ENCODE measurements at regions of chr5 and their contacts with region 1.

Region 1: GRCh38 chr5:96641368-96642228 is 20.6 kb upstream of the CAST start:
- DNase-seq: no peak
- H3K4me3 Mint-ChIP-seq: no peak overlapping the region
- H3K27ac Mint-ChIP-seq: no peak overlapping the region
- H3K4me1 Mint-ChIP-seq: peaks cover 9% of the 10 kb centered on the region
- H3K27me3 Mint-ChIP-seq: peaks cover 18% of the 10 kb centered on the region

Region 2: GRCh38 chr5:96626956-96627355 is 14.6 kb before region 1 on chr5:
- intact Hi-C with region 1: loop called (anchors 2 kb)
- DNase-seq: no peak
- H3K4me3 Mint-ChIP-seq: no peak overlapping the region
- H3K27ac Mint-ChIP-seq: no peak overlapping the region
- H3K4me1 Mint-ChIP-seq: peaks cover 9% of the 10 kb centered on the region
- H3K27me3 Mint-ChIP-seq: peaks cover 9% of the 10 kb centered on the region

Region 3: DNA sequence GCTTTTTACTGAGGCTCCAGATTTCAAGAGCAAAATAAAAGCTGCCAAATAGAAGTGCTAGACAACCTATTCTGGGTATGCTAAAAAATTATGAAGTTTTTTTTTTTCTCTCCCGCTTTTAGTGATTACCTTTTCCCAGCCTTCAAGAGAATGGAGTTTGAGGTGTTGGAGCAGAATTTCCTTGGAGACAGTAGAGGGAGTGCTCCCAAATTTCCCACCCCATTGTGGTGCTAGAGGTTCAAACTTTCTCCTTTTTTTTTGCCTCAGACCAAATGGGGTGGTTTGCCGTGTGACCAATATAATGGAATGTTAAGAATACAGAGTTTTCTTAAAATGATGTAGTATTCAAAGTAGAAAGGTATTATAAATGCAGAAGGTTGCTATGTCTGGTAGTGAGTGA is 785.6 kb after region 1 on chr5:
- intact Hi-C with region 1: no loop called
- DNase-seq: no peak
- H3K4me3 Mint-ChIP-seq: no peak overlapping the region
- H3K27ac Mint-ChIP-seq: no peak overlapping the region
- H3K4me1 Mint-ChIP-seq: no peaks in the 10 kb centered on the region
- H3K27me3 Mint-ChIP-seq: peaks cover 7% of the 10 kb centered on the region